ENCODE measurements at regions of chr20 and their contacts with region 1.

Region 1: DNA sequence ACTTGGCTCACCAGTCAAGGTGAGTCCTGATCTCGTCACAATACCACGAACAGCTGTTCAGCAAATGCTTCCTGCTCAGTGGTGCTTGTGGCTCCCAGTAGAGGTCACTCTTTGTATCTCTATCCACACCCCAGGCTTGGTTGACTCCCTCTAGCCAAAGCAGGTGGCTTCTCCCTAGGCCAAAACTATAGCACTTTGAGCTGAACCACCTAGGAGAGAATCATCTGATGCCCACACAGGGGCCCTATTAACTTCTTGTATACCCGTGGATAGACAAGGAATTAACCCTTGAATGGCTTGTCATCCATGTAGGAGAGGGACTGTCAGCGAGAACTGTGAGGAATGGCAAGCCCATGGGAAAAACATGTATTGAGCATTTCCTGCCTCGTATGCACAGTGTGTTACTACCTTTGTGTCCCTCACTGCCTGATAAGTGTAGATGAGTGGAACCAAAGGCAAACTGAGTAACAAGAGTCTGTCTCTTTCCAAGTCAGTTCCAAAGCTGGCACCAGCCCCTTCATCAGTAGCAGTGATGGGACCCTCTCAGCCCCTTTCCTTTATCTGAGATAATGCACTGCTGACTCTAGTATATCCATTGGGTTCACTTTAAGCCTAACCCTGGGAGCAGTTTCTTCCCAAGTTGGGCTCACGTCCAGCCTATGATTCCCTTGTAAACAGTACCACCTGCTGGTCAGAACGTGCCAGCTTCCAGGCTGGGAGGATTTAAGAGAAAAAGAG is 42.5 kb downstream of the EIF2S2 start:
- DNase-seq: peak; percentile 63
- ATAC-seq: peak; percentile 81
- H3K4me3 Mint-ChIP-seq: no peak overlapping the region
- H3K27ac Mint-ChIP-seq: peak overlapping the region; percentile 27
- H3K4me1 Mint-ChIP-seq: peaks cover 42% of the 10 kb centered on the region
- H3K27me3 Mint-ChIP-seq: no peaks in the 10 kb centered on the region
- CTCF ChIP-seq: peak; percentile 82

Region 2: DNA sequence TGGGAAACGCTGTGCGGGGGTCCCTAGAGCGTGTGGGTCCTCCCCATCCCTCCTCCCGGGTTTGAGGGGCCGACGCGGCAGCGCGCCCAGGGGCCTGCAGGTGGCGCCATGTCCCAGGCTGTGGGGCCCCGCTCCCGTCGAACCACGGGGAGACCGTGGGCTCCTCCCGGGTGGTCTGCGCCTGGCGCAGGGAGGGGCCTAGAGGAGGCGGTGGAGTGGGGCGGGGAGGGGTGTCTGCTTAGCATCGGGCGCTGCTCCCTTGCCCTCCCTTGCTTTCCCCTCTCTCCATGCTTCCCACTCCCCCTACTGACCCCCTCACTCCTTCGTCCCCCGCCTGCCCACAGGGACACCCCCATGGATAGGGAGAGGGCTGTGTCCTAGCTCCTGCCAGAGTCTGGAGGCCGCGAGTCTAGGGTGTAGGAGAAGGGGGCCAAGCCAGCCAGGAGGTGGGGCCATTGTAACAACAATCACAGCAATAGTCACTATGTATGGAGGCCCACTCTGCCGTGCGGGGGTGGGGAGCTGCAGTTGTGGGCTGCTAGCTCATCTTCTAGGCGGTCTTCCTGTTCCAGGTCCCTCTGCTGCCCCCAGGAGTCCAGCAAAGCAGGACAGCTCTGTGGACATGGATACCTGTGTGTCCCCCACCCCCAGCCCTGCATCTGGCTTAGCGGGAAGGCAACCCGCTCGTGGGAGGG is 206.7 kb before region 1 on chr20:
- CTCF ChIA-PET with region 1: interaction called, 7 read pairs
- POLR2A ChIA-PET with region 1: no interaction called
- intact Hi-C with region 1: loop called (anchors 10 kb)
- DNase-seq: peak; percentile 73
- ATAC-seq: peak; percentile 71
- H3K4me3 Mint-ChIP-seq: no peak overlapping the region
- H3K27ac Mint-ChIP-seq: no peak overlapping the region
- H3K4me1 Mint-ChIP-seq: peaks cover 19% of the 10 kb centered on the region
- H3K27me3 Mint-ChIP-seq: no peaks in the 10 kb centered on the region
- CTCF ChIP-seq: peak; percentile 91

Region 3: DNA sequence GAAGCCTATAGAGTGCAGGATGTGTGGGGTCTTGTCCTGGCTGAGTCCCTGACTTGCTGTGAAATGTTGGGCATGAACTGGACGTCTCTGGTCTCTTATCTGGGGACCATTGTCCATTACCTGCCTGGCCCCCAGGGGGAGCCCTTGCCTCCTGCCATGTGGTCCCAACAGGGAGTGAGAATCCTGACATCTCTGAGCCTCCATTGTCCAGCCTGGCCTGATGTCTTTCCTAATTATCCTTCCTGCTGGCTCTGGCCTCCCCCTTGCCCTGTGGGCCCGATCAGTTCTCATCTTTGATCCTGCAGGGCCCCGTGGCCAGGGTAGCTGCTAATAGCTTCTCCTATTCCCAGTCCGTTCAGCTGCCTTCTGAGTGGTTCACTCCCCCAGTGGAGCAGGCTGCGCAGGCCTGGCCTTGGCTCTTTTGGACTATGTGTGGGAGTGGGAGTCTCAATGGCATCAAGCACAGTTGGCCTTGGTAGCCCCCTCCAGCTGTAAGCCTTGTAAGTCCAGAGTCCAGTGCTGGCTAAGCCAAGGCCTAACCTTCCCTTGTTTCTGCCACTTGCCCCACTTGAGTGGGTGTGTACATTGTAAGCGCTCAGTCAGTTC is 153.7 kb before region 1 on chr20:
- CTCF ChIA-PET with region 1: interaction called, 45 read pairs
- POLR2A ChIA-PET with region 1: no interaction called
- intact Hi-C with region 1: no loop called
- DNase-seq: peak; percentile 73
- ATAC-seq: peak; percentile 54
- H3K4me3 Mint-ChIP-seq: no peak overlapping the region
- H3K27ac Mint-ChIP-seq: no peak overlapping the region
- H3K4me1 Mint-ChIP-seq: peaks cover 19% of the 10 kb centered on the region
- H3K27me3 Mint-ChIP-seq: no peaks in the 10 kb centered on the region
- CTCF ChIP-seq: peak; percentile 80

Region 4: GRCh38 chr20:33933469-33933909 is 136.0 kb before region 1 on chr20:
- CTCF ChIA-PET with region 1: interaction called, 8 read pairs
- POLR2A ChIA-PET with region 1: interaction called, 3 read pairs
- intact Hi-C with region 1: loop called (anchors 5 kb)
- DNase-seq: peak; percentile 78
- ATAC-seq: peak; percentile 95
- H3K4me3 Mint-ChIP-seq: no peak overlapping the region
- H3K27ac Mint-ChIP-seq: no peak overlapping the region
- H3K4me1 Mint-ChIP-seq: no peaks in the 10 kb centered on the region
- H3K27me3 Mint-ChIP-seq: no peaks in the 10 kb centered on the region
- CTCF ChIP-seq: peak; percentile 23

Region 5: DNA sequence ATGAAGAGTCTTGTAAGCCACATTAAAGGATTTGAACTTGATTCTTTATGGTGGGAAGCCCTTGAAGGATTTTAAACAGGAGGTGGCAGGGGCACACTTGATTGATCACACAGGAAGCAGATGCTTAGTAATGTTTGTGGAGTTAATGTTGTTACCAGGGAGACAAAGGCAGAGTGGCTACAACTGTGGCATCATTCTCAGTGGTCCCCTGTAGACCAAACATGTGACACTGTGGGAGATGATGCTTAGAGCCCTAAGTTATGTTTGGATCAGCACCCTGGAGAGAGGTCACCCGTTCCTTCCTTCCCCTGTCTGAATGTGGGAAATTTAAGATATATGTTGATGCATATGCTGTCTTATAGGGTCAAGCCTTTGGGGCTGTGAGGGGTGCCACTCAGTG is 10.7 kb before region 1 on chr20:
- CTCF ChIA-PET with region 1: interaction called, 17 read pairs
- POLR2A ChIA-PET with region 1: no interaction called
- intact Hi-C with region 1: no loop called
- DNase-seq: peak; percentile 25
- ATAC-seq: peak; percentile 81
- H3K4me3 Mint-ChIP-seq: no peak overlapping the region
- H3K27ac Mint-ChIP-seq: no peak overlapping the region
- H3K4me1 Mint-ChIP-seq: peaks cover 71% of the 10 kb centered on the region
- H3K27me3 Mint-ChIP-seq: no peaks in the 10 kb centered on the region
- CTCF ChIP-seq: no peak

Region 6: GRCh38 chr20:34083137-34083536 is 13.6 kb after region 1 on chr20:
- CTCF ChIA-PET with region 1: interaction called, 11 read pairs
- POLR2A ChIA-PET with region 1: interaction called, 3 read pairs
- intact Hi-C with region 1: no loop called
- DNase-seq: no peak
- ATAC-seq: no peak
- H3K4me3 Mint-ChIP-seq: no peak overlapping the region
- H3K27ac Mint-ChIP-seq: peak overlapping the region; percentile 11
- H3K4me1 Mint-ChIP-seq: peaks cover 2% of the 10 kb centered on the region
- H3K27me3 Mint-ChIP-seq: no peaks in the 10 kb centered on the region
- CTCF ChIP-seq: no peak

Measured in activated CD8-positive, alpha-beta T cell treated with anti-CD3 and anti-CD28 coated beads for 36 hours (primary cell).